ENCODE measurements at regions of chr3 and their contacts with region 1.

Region 1: DNA sequence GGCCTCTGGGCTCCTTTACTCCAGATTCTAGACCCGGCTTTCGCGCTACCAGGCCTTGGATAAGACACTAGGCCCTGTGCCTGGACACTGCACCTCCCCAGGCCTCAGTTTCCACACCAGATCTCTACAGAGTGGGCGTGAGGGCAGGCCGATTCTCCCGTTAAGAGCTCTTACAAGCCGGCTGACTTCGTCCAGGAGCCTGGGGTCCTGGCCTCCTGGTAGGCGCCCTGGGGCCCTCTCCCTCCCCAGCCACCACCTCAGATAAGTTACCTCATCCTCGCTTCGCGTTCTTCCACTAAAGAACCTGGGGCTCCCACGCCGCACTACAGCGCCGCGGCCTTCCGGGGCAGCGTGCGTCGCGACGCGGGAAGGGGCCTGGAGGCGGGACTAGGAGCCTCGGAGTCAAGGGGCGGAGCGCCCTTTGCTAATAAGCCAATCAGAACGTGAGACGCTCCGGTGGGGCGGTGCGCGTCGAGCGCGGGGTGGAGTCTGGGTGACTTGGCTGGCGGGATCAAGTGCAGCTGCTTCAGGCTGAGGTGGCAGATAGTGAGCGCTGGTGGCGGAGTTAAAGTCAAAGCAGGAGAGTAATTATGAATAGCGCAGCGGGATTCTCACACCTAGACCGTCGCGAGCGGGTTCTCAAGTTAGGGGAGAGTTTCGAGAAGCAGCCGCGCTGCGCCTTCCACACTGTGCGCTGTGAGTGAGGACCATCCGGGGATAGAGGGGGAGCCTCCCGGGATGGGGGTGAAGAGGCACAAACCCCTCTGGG is at the starts of genes EAF2 and IQCB1:
- DNase-seq: peak; percentile 90 to 98 (median 95)
- ATAC-seq: peak; percentile 95
- H3K4me3 ChIP-seq: peak within 1 kb of the TSS; percentile 70
- H3K4me3 Mint-ChIP-seq: peak within 1 kb of the TSS; percentile 92
- H3K27ac ChIP-seq: peak within 1 kb of the TSS; percentile 83 to 84
- H3K27ac Mint-ChIP-seq: peak within 1 kb of the TSS; percentile 79
- H3K4me1 ChIP-seq: peaks cover 25% of the 10 kb centered on the region
- H3K4me1 Mint-ChIP-seq: peaks cover 61% of the 10 kb centered on the region
- H3K27me3 ChIP-seq: no peaks in the 10 kb centered on the region
- H3K27me3 Mint-ChIP-seq: no peaks in the 10 kb centered on the region
- CTCF ChIP-seq: no peak
- total RNA-seq, gene EAF2: 3.7 to 4.4 TPM
- total RNA-seq, gene IQCB1: 39.6 to 41.3 TPM

Region 2: GRCh38 chr3:120596116-120596852 is 1238.6 kb before region 1 on chr3 and contains the start of gene NDUFB4:
- CTCF ChIA-PET with region 1: no interaction called
- POLR2A ChIA-PET with region 1: no interaction called
- intact Hi-C with region 1: loop called in 1 of 2 experiments (anchors 10 kb)
- DNase-seq: peak; percentile 87 to 99 (median 94)
- ATAC-seq: peak; percentile 87
- H3K4me3 ChIP-seq: peak within 1 kb of the TSS; percentile 88
- H3K4me3 Mint-ChIP-seq: peak within 1 kb of the TSS; percentile 98
- H3K27ac ChIP-seq: peak within 1 kb of the TSS; percentile 94 to 95
- H3K27ac Mint-ChIP-seq: no peak within 1 kb of the TSS
- H3K4me1 ChIP-seq: peaks cover 14% of the 10 kb centered on the region
- H3K4me1 Mint-ChIP-seq: peaks cover 8% of the 10 kb centered on the region
- H3K27me3 ChIP-seq: no peaks in the 10 kb centered on the region
- H3K27me3 Mint-ChIP-seq: no peaks in the 10 kb centered on the region
- CTCF ChIP-seq: no peak
- total RNA-seq, gene NDUFB4: 81.3 to 84.0 TPM

Region 3: DNA sequence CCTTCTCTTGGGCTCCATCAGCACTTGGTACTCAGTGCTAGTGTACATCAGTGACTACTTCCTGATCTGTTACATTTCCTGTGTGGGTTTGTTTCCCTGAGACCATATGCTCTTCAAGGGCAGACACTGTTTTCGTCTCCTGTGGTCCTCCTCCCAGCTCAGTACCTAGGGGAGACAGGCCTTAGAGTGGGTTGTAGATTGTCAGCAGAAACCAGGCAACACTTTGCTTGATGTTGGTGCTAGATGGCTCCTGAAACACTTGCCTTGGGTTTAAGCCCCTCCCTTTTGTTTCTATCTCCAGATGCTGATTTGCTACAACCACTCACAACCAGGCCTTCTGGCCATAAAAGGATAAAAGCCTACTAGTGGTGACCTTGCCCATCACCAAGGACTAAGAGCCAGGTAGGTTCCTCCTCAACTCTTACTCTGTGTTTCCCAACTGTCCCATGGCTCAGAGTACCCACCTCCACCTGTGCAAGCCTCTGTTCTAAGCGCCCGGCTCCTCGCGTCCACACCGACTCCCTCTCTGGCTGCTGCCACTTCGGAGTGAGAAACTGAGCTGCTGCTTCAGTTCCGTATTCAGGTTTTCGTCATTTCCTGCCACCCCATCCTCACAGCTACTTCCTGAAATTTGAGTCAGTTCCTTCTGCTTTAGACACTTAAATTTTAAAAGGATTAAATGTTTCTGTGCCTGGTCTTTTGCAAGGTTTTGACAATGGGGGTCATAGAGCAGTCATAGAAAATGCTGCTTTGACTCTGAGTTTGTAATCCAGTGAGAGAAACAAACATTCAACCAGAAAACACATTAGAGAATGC is 174.3 kb before region 1 on chr3 and contains the start of gene HCLS1:
- CTCF ChIA-PET with region 1: no interaction called
- POLR2A ChIA-PET with region 1: interaction called, 7 read pairs
- intact Hi-C with region 1: loop called (anchors 2 kb)
- DNase-seq: peak; percentile 46 to 89 (median 62)
- ATAC-seq: peak; percentile 83
- H3K4me3 ChIP-seq: peak within 1 kb of the TSS; percentile 61
- H3K4me3 Mint-ChIP-seq: peak within 1 kb of the TSS; percentile 94
- H3K27ac ChIP-seq: peak within 1 kb of the TSS; percentile 83 to 97
- H3K27ac Mint-ChIP-seq: peak within 1 kb of the TSS; percentile 96
- H3K4me1 ChIP-seq: peaks cover 48% of the 10 kb centered on the region
- H3K4me1 Mint-ChIP-seq: peaks cover 55% of the 10 kb centered on the region
- H3K27me3 ChIP-seq: no peaks in the 10 kb centered on the region
- H3K27me3 Mint-ChIP-seq: no peaks in the 10 kb centered on the region
- CTCF ChIP-seq: no peak
- total RNA-seq, gene HCLS1: 204 to 206 TPM

Region 4: DNA sequence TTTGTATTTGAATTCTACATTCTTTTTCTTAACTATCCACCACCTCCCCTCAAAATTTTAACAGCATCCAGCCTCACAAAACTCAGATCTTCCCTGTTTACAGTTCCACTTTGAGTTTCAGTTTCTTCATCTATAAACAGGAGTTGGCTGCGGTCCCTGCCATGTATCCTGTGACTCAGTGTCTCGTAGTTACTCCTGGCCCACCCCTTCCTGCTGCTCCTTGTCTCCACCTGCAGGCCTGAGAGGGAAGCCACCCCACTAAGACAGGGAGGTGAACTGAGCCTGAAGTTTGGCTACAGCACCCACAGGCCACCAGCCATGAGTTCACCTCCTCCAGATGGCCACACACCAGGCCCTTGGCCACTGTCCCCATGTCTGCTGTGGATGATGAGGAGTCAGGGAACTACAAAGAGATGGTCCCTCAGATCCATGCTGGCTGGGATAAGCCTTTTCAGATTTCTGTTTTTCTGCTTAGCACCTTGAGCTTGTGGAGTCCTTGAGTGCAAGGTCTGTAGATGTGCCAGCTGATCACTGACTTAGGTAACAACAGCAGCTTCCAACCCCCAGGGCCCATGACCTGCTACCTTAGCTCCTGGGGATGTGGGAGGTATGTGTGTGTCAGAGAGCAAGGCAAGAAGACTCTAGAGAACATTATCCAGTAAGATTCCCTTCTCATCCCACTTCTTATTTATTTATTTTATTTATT is 257.7 kb after region 1 on chr3:
- CTCF ChIA-PET with region 1: no interaction called
- POLR2A ChIA-PET with region 1: no interaction called
- intact Hi-C with region 1: no loop called
- DNase-seq: peak in 7 of 14 experiments; percentile 2 to 64 (median 18)
- ATAC-seq: no peak
- H3K4me3 ChIP-seq: no peak overlapping the region
- H3K4me3 Mint-ChIP-seq: no peak overlapping the region
- H3K27ac ChIP-seq: no peak overlapping the region
- H3K27ac Mint-ChIP-seq: no peak overlapping the region
- H3K4me1 ChIP-seq: peaks cover 6% of the 10 kb centered on the region
- H3K4me1 Mint-ChIP-seq: no peaks in the 10 kb centered on the region
- H3K27me3 ChIP-seq: no peaks in the 10 kb centered on the region
- H3K27me3 Mint-ChIP-seq: no peaks in the 10 kb centered on the region
- CTCF ChIP-seq: no peak

Region 5: DNA sequence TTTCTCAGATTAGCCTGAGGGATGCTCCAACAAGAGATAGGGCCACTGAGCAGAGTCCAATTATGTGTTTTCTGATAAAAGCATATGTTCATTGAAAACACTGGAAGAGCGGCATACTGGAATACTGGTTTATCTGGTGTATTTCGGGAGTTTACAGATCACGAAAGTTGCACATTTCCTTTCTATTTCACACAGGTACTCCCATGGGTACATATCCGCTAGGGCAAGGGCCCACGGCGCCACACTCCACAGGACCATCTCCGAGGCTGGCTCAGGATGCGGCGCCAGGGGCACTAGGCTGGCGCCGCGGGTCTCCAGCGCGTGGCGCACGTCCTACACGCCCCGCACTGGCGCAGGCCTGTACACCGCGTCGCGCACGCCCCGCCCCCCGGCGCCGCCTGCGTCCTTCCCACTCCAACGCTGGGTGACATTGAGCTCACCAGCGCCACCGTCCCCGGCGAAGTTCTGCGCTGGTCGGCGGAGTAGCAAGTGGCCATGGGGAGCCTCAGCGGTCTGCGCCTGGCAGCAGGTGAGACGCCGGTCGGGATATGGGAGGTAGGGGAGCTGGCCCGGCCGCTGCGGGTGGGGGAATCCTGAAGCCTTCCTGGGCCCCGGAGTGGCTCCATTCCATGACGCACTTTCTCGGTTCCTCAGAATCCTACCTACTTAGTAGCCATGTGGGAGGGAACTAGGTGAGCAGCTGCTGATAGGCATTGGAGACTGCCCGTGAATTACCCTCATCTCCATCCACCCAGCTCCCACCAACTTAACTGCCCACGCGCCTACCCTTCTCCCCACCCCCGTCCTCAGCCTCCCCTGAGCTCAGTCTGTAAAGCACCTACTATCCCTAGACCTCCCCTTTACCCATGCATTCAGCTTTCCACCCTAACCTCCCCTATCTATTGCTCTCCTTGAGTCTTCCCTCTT is 549.2 kb after region 1 on chr3 and contains the start of gene FAM162A:
- CTCF ChIA-PET with region 1: no interaction called
- POLR2A ChIA-PET with region 1: interaction called, 8 read pairs
- intact Hi-C with region 1: loop called in 1 of 2 experiments (anchors 10 kb)
- DNase-seq: peak; percentile 87 to 98 (median 92)
- ATAC-seq: peak; percentile 94
- H3K4me3 ChIP-seq: peak within 1 kb of the TSS; percentile 76
- H3K4me3 Mint-ChIP-seq: peak within 1 kb of the TSS; percentile 94
- H3K27ac ChIP-seq: peak within 1 kb of the TSS; percentile 61 to 71
- H3K27ac Mint-ChIP-seq: peak within 1 kb of the TSS; percentile 87
- H3K4me1 ChIP-seq: peaks cover 17% of the 10 kb centered on the region
- H3K4me1 Mint-ChIP-seq: peaks cover 54% of the 10 kb centered on the region
- H3K27me3 ChIP-seq: no peaks in the 10 kb centered on the region
- H3K27me3 Mint-ChIP-seq: no peaks in the 10 kb centered on the region
- CTCF ChIP-seq: peak; percentile 71
- total RNA-seq, gene FAM162A: 32.8 to 34.6 TPM

Region 6: GRCh38 chr3:122679085-122679881 is 844.4 kb after region 1 on chr3:
- CTCF ChIA-PET with region 1: no interaction called
- POLR2A ChIA-PET with region 1: no interaction called
- intact Hi-C with region 1: loop called in 1 of 2 experiments (anchors 10 kb)
- DNase-seq: peak; percentile 71 to 92 (median 78)
- ATAC-seq: peak; percentile 68
- H3K4me3 ChIP-seq: peak overlapping the region; percentile 93
- H3K4me3 Mint-ChIP-seq: peak overlapping the region; percentile 93
- H3K27ac ChIP-seq: peak overlapping the region; percentile 88 to 91
- H3K27ac Mint-ChIP-seq: peak overlapping the region; percentile 96
- H3K4me1 ChIP-seq: peaks cover 46% of the 10 kb centered on the region
- H3K4me1 Mint-ChIP-seq: peaks cover 54% of the 10 kb centered on the region
- H3K27me3 ChIP-seq: no peaks in the 10 kb centered on the region
- H3K27me3 Mint-ChIP-seq: no peaks in the 10 kb centered on the region
- CTCF ChIP-seq: peak; percentile 83

Region 7: DNA sequence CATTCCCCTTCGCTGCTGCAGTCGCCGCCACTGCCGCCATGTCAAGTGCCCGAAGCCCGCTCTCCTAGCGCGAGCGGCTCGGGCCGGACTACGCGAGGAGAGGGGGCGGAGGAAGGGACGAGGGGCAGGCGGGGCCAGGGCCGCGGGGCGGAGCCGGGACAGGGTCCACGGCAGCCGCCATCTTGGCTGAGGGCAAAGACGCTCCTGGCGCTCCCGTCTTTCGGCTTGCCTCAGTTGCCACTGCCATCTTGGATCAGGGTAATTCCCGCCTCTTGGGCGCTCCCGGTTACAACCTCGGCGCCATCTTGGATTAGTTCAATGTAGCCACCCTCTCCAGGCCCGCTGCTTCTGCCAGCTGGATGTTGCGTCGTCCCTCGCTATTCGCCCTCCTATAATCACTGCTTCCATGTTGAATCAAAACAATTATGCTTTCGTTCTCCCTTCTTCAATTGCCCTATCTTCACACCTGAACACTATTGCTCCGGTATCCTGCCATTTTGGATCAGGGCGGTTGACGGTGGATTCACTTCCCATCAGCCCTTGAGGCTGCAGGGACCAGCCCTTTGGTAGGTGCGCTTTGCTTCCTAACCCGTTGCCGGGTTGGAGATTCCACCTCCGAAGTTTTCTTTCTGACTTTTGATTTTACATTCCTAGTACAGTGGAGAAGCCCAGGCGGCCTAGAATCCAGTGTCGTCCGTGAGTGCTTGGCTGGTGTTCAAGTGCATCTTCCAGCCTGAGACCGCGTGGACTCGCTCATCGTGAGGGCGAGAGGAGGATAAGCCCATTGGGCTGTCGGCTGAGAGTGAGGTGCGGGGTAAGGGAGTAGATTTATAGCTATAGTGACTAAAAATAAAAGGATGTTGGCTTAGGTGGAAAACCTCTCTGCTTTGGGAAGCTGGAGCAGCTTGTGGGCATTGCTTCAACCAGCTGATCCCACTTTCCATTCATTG is 1750.4 kb after region 1 on chr3 and contains the start of gene HACD2:
- CTCF ChIA-PET with region 1: no interaction called
- POLR2A ChIA-PET with region 1: no interaction called
- intact Hi-C with region 1: loop called in 1 of 2 experiments (anchors 5 kb)
- DNase-seq: peak; percentile 85 to 98 (median 92)
- ATAC-seq: peak; percentile 93
- H3K4me3 ChIP-seq: peak within 1 kb of the TSS; percentile 79
- H3K4me3 Mint-ChIP-seq: peak within 1 kb of the TSS; percentile 95
- H3K27ac ChIP-seq: peak within 1 kb of the TSS; percentile 84 to 92
- H3K27ac Mint-ChIP-seq: peak within 1 kb of the TSS; percentile 89
- H3K4me1 ChIP-seq: peaks cover 16% of the 10 kb centered on the region
- H3K4me1 Mint-ChIP-seq: peaks cover 25% of the 10 kb centered on the region
- H3K27me3 ChIP-seq: no peaks in the 10 kb centered on the region
- H3K27me3 Mint-ChIP-seq: no peaks in the 10 kb centered on the region
- CTCF ChIP-seq: no peak
- total RNA-seq, gene HACD2: 12.1 to 13.3 TPM